Lower lobe of right lung (tissue), 2 donors: ENCODE measurements at regions of chr13 and their contacts with region 1.

Region 1: GRCh38 chr13:110421696-110422385 is 114.8 kb downstream of the COL4A2 start:
- DNase-seq: no peak
- ATAC-seq: no peak
- H3K4me3 ChIP-seq: no peak overlapping the region
- H3K27ac ChIP-seq: no peak overlapping the region
- H3K4me1 ChIP-seq: peaks cover 37% of the 10 kb centered on the region
- H3K27me3 ChIP-seq: no peaks in the 10 kb centered on the region
- CTCF ChIP-seq: no peak

Region 2: DNA sequence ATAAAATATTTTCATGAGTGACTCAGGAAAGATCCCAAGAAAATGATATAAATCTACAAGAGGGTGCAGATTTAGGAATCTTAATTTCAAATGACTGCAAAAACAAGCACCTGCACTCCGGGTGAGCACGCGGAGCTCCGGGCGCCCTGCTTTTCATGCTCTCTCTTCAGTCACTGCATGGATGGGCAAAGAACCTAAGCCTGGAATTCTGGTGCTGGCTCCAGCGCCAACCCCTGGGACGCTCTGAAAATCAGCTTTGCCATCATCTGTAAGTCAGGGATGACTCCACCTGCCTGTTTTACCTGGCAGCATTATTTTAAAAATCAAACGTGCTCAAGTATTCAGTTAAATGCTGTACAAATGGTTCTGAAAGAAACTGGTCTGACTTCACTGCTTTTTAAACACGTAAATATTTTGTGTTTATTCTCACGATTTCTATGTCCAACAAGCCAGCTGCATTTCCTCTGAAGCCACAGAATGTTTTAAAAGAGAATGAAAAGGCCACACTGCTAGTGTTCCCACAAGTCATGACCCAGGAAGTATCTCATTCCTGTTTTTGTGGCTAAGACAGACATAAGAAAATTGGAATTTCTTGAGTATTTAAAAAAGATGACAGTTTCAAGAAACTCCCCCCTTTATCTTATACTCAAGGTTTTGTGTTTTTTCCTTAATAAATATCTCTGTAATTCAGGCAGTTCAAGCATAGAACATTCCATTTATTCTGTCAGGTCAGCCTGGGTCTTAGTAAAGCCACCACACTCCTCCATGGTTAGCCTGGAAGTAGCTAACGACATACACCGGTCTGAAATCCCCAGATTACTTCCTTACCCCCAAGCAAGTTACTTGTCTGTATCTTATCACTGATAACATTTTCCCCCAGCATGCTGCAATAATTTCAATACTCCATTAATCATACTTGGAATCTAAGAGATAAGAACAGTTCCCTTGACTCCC is 196.0 kb before region 1 on chr13:
- intact Hi-C with region 1: loop called (anchors 10 kb)
- DNase-seq: no peak
- ATAC-seq: no peak
- H3K4me3 ChIP-seq: no peak overlapping the region
- H3K27ac ChIP-seq: no peak overlapping the region
- H3K4me1 ChIP-seq: peaks cover 38% of the 10 kb centered on the region
- H3K27me3 ChIP-seq: no peaks in the 10 kb centered on the region
- CTCF ChIP-seq: no peak

Region 3: DNA sequence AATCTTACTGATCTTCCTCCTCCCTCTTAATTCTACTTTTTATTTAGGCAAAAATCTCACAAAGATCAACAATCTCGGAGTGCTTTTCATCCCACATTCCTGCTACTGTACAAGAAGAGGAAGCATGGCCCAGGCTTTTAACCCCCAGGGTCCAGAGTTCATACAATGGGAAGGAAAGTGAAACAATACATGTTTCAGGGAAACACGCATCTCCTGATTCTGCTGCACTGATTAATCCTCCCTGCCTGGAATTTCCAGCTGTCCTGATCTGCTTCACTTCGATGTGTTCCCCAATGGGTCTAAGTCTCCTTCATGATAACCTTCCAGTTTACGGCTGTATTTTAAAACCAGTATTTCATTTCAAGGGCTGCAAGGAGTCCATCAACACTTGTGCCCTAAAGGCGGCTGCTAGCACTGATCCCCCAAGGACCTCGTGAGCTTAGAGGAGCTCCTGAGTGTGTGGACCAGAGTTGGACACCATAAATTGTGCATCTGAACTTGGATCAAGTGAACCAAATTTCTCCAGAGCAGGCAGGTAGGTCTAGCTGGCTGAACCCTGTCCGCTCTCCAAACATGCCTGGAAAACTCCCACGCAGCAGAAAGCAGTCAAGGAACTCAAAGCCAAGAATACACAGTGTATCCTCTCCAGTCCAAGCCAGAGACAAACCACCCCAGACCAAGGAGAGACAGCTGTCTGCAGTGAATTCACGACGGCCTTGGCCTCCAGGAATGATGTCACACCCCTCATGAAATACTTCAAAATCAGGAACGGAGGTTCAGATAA is 159.1 kb before region 1 on chr13:
- intact Hi-C with region 1: no loop called
- DNase-seq: no peak
- ATAC-seq: peak in 1 of 2 donors; percentile 5
- H3K4me3 ChIP-seq: no peak overlapping the region
- H3K27ac ChIP-seq: peak overlapping the region; percentile 14
- H3K4me1 ChIP-seq: peaks cover 59% of the 10 kb centered on the region
- H3K27me3 ChIP-seq: no peaks in the 10 kb centered on the region
- CTCF ChIP-seq: no peak